ENCODE measurements at regions of chr9 and their contacts with region 1.

Region 1: DNA sequence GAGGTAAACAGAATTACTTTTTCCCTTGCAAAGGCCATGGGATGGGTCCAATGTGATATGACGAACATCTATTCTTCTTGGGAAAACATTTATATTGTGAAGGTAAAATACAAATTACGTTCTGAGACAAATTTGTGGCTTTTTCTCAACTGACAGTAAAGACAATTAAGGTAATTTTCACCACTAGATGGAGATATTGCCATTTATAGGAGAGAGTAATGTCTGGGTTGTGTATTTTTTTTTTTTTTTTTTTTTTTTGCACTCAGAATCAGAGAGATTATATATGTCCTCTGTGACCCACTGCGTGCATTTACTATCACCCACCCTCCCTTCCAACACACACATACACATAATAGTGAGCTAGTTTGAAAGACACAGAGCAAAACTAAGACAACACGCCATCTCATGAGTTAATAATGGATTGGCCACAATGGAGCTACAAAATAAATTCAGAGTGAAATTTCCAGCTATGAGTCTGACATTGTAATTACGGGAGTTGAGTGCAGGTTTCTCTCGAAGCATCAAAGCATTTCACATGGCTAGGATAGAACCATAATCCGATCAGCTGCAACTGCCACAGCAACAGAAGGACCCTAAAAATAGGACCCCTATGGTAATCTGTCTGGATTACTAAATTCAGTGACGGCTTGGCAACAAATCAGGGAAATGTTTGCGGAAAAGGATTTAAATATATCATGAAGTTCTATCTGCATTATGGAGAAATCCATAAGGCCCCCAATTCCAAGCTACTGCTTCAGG is 49.2 kb downstream of the ANXA1 start:
- DNase-seq: no peak
- H3K4me3 ChIP-seq: no peak overlapping the region
- H3K27ac ChIP-seq: no peak overlapping the region
- H3K27me3 ChIP-seq: no peaks in the 10 kb centered on the region
- CTCF ChIP-seq: peak; percentile 61

Region 2: DNA sequence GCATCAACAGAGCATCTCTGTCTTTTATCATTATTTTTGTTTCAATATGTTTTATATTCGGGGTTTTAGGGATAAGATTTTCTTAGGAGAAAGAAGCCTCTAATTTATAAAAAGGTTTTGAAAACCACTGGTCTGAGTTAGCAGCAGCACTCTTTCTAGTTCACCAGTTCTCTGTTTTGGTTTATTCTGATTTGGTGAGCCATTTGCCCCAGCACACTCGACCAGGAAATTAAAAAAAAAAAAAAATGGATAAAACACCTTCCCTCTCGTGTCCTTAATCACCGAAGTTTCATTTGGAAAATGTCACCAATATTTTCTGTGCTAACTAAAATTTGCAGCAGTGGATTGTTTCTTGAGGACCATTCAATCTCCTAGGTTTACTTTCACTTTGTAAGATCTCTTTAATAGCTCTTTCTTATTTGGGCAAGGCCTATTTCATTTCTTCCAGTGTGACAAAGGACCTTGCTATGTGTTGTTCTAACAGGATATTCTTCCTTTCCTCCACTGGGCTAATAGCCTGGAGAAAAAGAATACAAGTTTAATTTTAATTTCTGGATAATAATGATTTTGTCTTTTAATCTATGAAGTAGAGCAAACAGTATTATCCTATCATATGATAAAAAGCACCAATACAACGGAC is 107.0 kb before region 1 on chr9:
- CTCF ChIA-PET with region 1: interaction called, 10 read pairs
- POLR2A ChIA-PET with region 1: no interaction called
- DNase-seq: no peak
- H3K4me3 ChIP-seq: no peak overlapping the region
- H3K27ac ChIP-seq: no peak overlapping the region
- H3K27me3 ChIP-seq: no peaks in the 10 kb centered on the region
- CTCF ChIP-seq: no peak

Region 3: GRCh38 chr9:73162987-73163768 is 37.7 kb before region 1 on chr9:
- CTCF ChIA-PET with region 1: no interaction called
- POLR2A ChIA-PET with region 1: no interaction called
- DNase-seq: no peak
- H3K4me3 ChIP-seq: no peak overlapping the region
- H3K27ac ChIP-seq: no peak overlapping the region
- H3K27me3 ChIP-seq: no peaks in the 10 kb centered on the region
- CTCF ChIP-seq: no peak

Region 4: DNA sequence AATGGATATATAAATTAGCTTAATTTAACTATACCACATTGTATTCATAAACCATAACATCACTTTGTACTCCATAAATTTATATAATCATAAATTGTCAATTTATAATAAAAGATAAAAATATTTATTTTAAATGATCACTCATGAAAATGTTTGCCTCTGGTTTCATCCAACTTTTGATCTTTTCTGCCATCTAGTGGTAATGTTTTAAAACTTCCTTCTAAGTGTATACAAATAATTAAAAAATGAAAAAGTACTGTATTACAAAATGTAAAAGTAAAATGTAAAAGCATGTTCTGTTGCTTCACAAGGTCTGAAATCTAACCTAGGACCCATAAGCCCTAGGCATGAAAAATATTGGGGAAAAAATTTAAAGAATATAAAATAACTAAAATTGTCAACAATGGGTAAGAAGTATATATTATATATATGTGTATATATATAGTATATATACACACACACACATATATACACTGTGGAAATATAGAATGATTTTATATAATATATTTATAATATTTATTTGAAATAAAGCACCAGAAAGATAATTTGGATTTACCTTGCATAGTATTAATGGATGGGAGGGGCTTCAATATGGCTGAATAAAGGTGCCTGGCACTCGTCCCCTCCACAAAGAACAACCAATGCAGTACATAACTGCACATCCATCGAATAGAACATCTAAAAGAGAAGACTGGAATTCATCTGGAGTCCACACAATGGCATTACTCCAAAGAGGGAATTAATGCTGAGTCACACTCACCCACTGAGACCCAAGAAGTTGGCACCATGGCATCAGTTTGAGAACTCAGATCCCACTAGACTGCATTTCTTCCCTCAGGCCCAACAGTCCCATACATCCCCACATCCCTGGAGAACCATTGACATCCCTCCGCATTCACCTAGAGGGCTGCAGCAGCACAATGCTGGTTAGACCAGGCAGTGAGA is 16.7 kb before region 1 on chr9:
- CTCF ChIA-PET with region 1: interaction called, 12 read pairs
- POLR2A ChIA-PET with region 1: no interaction called
- DNase-seq: peak; percentile 8
- H3K4me3 ChIP-seq: no peak overlapping the region
- H3K27ac ChIP-seq: no peak overlapping the region
- H3K27me3 ChIP-seq: no peaks in the 10 kb centered on the region
- CTCF ChIP-seq: peak; percentile 44

Region 5: DNA sequence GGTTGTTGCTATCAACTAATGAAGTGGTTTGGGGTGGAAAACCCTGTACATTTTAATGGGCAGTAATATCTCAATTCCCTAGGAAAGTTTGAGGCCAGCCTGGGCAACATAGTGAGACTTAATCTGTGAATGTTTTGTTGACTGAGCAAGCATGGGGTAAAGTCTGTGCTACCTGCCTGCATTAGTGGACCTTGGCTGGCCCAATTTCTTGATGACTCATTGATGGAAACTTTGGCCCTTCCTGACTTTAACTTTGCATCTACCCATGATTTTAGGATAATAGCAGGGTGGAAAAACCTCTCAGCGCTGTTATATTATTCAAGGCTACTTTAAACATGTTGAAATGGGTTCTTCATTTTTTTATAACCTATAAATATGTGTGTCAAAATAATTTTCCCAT is 906.8 kb after region 1 on chr9:
- CTCF ChIA-PET with region 1: interaction called, 11 read pairs
- POLR2A ChIA-PET with region 1: no interaction called
- DNase-seq: no peak
- H3K4me3 ChIP-seq: no peak overlapping the region
- H3K27ac ChIP-seq: no peak overlapping the region
- H3K27me3 ChIP-seq: no peaks in the 10 kb centered on the region
- CTCF ChIP-seq: no peak

Region 6: GRCh38 chr9:74643303-74643923 is 1442.5 kb after region 1 on chr9:
- CTCF ChIA-PET with region 1: interaction called, 25 read pairs
- POLR2A ChIA-PET with region 1: no interaction called
- DNase-seq: no peak
- H3K4me3 ChIP-seq: no peak overlapping the region
- H3K27ac ChIP-seq: no peak overlapping the region
- H3K27me3 ChIP-seq: no peaks in the 10 kb centered on the region
- CTCF ChIP-seq: no peak

Measured in AG04450 (cell line).